ENCODE measurements at regions of chr12 and their contacts with region 1.

Region 1: DNA sequence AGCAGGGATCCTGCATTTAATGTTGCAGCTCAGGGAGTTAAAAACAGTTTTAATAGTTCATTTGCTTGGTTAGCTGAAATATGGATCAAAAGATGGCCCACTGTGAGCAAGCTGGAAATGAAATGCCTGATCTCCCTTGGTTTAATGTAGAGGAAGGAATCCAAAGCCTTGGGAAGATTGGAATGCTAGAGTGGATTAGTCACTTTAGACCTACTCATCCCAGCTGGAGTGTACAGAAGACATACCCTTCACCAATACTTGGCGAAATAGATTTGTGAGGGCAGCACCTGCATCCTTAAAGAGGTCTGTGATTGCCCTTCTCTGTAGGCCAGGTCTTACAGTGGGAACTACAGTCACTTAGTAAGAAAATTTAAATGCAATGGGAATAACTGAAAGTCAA is 58.0 kb upstream of the KRAS start:
- DNase-seq: no peak
- H3K4me3 ChIP-seq: no peak overlapping the region
- H3K27ac ChIP-seq: no peak overlapping the region
- H3K4me1 ChIP-seq: no peaks in the 10 kb centered on the region
- H3K27me3 ChIP-seq: no peaks in the 10 kb centered on the region
- CTCF ChIP-seq: no peak

Region 2: GRCh38 chr12:25324861-25325260 is 16.1 kb after region 1 on chr12:
- CTCF ChIA-PET with region 1: no interaction called
- POLR2A ChIA-PET with region 1: no interaction called
- intact Hi-C with region 1: loop called (anchors 1 kb)
- DNase-seq: no peak
- H3K4me3 ChIP-seq: no peak overlapping the region
- H3K27ac ChIP-seq: no peak overlapping the region
- H3K4me1 ChIP-seq: no peaks in the 10 kb centered on the region
- H3K27me3 ChIP-seq: no peaks in the 10 kb centered on the region
- CTCF ChIP-seq: no peak